ENCODE measurements at regions of chr12 and their contacts with region 1.

Region 1: GRCh38 chr12:60494244-60494643 is 898.4 kb downstream of the SLC16A7 start:
- DNase-seq: peak; percentile 63
- ATAC-seq: peak; percentile 81
- H3K4me3 ChIP-seq: no peak overlapping the region
- H3K27ac ChIP-seq: no peak overlapping the region
- H3K4me1 ChIP-seq: no peaks in the 10 kb centered on the region
- H3K27me3 ChIP-seq: no peaks in the 10 kb centered on the region
- CTCF ChIP-seq: peak; percentile 86
- POLR2A ChIP-seq: no peak
- RAD21 ChIP-seq: peak; percentile 86

Region 2: DNA sequence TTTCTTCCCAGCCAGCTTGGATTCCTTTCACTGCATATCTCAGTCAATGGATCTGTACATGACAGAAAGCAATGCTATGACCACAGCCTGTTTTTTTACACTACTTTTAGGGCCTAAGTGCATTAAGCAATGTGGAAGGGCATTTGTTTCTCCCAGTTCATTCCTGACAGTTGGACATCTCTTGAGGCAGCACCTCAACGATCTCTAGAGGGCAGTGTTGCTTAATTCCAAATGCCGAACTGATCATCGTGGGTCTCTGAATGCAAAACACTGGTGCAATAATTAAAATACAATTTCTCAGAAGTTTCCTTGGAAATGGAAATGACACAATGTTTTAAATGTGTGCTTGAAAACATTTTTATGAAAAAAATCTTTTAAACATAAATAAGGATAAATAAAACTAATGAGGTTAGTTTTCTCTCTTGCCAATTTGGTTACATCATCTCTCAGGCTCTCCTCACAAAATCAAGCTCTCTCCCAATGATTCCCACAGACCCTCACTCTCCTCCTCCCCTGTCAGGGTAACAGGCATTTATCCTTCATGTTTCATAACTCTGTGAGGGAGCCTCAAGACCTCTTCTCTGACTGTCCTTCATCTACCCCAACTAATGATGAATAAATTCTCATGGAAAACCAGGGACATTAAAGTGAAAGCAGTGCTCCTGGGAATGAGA is 1090.8 kb before region 1 on chr12:
- CTCF ChIA-PET with region 1: no interaction called
- POLR2A ChIA-PET with region 1: no interaction called
- dilution Hi-C with region 1: no loop called
- in situ Hi-C with region 1: loop called (anchors 25 kb)
- intact Hi-C with region 1: no loop called
- DNase-seq: peak; percentile 75
- ATAC-seq: peak; percentile 98
- H3K4me3 ChIP-seq: peak overlapping the region; percentile 19; the same call in 1 of the 2 replicates
- H3K27ac ChIP-seq: peak overlapping the region; percentile 35; the same call in 1 of the 2 replicates
- H3K4me1 ChIP-seq: no peaks in the 10 kb centered on the region
- H3K27me3 ChIP-seq: no peaks in the 10 kb centered on the region
- CTCF ChIP-seq: peak; percentile 82
- POLR2A ChIP-seq: no peak
- RAD21 ChIP-seq: peak; percentile 85

Region 3: GRCh38 chr12:59834659-59835474 is 659.4 kb before region 1 on chr12:
- CTCF ChIA-PET with region 1: interaction called, 5 read pairs
- POLR2A ChIA-PET with region 1: no interaction called
- dilution Hi-C with region 1: no loop called
- in situ Hi-C with region 1: no loop called
- intact Hi-C with region 1: loop called (anchors 1 kb)
- DNase-seq: peak; percentile 47
- ATAC-seq: no peak; the same call in 1 of the 2 replicates
- H3K4me3 ChIP-seq: no peak overlapping the region
- H3K27ac ChIP-seq: no peak overlapping the region
- H3K4me1 ChIP-seq: no peaks in the 10 kb centered on the region
- H3K27me3 ChIP-seq: no peaks in the 10 kb centered on the region
- CTCF ChIP-seq: peak; percentile 63
- POLR2A ChIP-seq: no peak
- RAD21 ChIP-seq: peak; percentile 59

Region 4: DNA sequence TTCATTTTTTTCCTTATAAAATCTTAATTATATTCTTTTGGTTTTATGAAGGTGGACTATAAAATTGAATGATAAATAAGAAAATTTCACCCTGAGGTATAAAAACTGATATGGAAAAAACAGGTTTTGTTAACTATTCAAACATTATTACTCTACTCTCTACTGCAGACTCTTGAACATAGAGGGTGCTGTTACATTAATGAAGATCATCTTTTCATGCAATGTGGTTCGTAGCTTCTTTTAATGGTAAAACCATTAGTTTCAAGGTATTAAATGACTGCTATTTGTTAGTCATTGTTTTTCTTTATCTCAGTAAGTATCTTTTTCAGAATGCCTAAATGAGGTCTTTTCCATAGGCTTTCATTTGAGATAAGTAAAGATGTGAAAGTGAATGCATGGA is 388.0 kb before region 1 on chr12:
- CTCF ChIA-PET with region 1: interaction called, 4 read pairs
- POLR2A ChIA-PET with region 1: no interaction called
- dilution Hi-C with region 1: no loop called
- in situ Hi-C with region 1: loop called (anchors 25 kb)
- intact Hi-C with region 1: loop called (anchors 2 kb)
- DNase-seq: peak; percentile 47
- ATAC-seq: peak; percentile 68
- H3K4me3 ChIP-seq: no peak overlapping the region
- H3K27ac ChIP-seq: no peak overlapping the region
- H3K4me1 ChIP-seq: no peaks in the 10 kb centered on the region; the same call in 1 of the 2 replicates
- H3K27me3 ChIP-seq: no peaks in the 10 kb centered on the region
- CTCF ChIP-seq: peak; percentile 48
- POLR2A ChIP-seq: no peak
- RAD21 ChIP-seq: peak; percentile 57

Region 5: GRCh38 chr12:60257063-60257462 is 237.2 kb before region 1 on chr12:
- CTCF ChIA-PET with region 1: interaction called, 6 read pairs
- POLR2A ChIA-PET with region 1: no interaction called
- dilution Hi-C with region 1: no loop called
- in situ Hi-C with region 1: loop called (anchors 10 kb)
- intact Hi-C with region 1: loop called (anchors 2 kb)
- DNase-seq: peak; percentile 86
- ATAC-seq: peak; percentile 93
- H3K4me3 ChIP-seq: no peak overlapping the region
- H3K27ac ChIP-seq: no peak overlapping the region
- H3K4me1 ChIP-seq: no peaks in the 10 kb centered on the region
- H3K27me3 ChIP-seq: no peaks in the 10 kb centered on the region
- CTCF ChIP-seq: peak; percentile 47
- POLR2A ChIP-seq: no peak
- RAD21 ChIP-seq: peak; percentile 65

Region 6: GRCh38 chr12:60888839-60889238 is 394.6 kb after region 1 on chr12:
- CTCF ChIA-PET with region 1: no interaction called
- POLR2A ChIA-PET with region 1: no interaction called
- dilution Hi-C with region 1: no loop called
- in situ Hi-C with region 1: no loop called
- intact Hi-C with region 1: no loop called
- DNase-seq: no peak
- ATAC-seq: no peak
- H3K4me3 ChIP-seq: no peak overlapping the region
- H3K27ac ChIP-seq: no peak overlapping the region
- H3K4me1 ChIP-seq: no peaks in the 10 kb centered on the region
- H3K27me3 ChIP-seq: no peaks in the 10 kb centered on the region
- CTCF ChIP-seq: no peak
- POLR2A ChIP-seq: no peak
- RAD21 ChIP-seq: no peak

Region 7: GRCh38 chr12:60977966-60978365 is 483.7 kb after region 1 on chr12:
- CTCF ChIA-PET with region 1: no interaction called
- POLR2A ChIA-PET with region 1: no interaction called
- dilution Hi-C with region 1: no loop called
- in situ Hi-C with region 1: no loop called
- intact Hi-C with region 1: no loop called
- DNase-seq: no peak
- ATAC-seq: no peak
- H3K4me3 ChIP-seq: no peak overlapping the region
- H3K27ac ChIP-seq: no peak overlapping the region
- H3K4me1 ChIP-seq: no peaks in the 10 kb centered on the region
- H3K27me3 ChIP-seq: no peaks in the 10 kb centered on the region
- CTCF ChIP-seq: no peak
- POLR2A ChIP-seq: no peak
- RAD21 ChIP-seq: no peak

Region 8: GRCh38 chr12:61993734-61994345 is 1499.6 kb after region 1 on chr12:
- CTCF ChIA-PET with region 1: no interaction called
- POLR2A ChIA-PET with region 1: no interaction called
- dilution Hi-C with region 1: no loop called
- in situ Hi-C with region 1: no loop called
- intact Hi-C with region 1: loop called (anchors 10 kb)
- DNase-seq: peak; percentile 6
- ATAC-seq: peak; percentile 71
- H3K4me3 ChIP-seq: no peak overlapping the region
- H3K27ac ChIP-seq: no peak overlapping the region
- H3K4me1 ChIP-seq: no peaks in the 10 kb centered on the region
- H3K27me3 ChIP-seq: no peaks in the 10 kb centered on the region
- CTCF ChIP-seq: peak; percentile 38
- POLR2A ChIP-seq: no peak
- RAD21 ChIP-seq: peak; percentile 50

Region 9: DNA sequence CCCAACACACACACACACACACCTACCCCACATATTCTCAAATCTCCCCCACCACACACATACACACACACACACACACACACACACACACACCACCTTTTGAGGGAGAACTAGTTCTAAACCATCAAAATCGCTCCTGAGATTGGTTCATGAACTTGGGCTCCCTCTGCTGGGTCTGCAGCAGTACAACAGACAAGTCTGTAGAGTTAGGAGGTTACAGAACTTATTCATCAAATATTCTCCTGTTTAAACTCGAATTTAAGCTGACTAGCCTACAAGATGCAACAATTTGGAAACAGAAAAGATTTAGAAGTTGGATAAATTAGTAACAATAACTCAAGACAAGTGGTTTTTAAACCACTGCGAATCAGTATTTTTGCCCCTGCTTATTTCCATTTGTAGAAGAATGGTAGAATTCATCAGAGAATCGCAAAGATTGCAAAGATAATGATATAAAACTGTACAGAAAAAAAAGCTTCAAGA is 1629.5 kb after region 1 on chr12:
- CTCF ChIA-PET with region 1: no interaction called
- POLR2A ChIA-PET with region 1: no interaction called
- dilution Hi-C with region 1: no loop called
- in situ Hi-C with region 1: no loop called
- intact Hi-C with region 1: loop called (anchors 10 kb)
- DNase-seq: peak; percentile 56
- ATAC-seq: peak; percentile 86
- H3K4me3 ChIP-seq: no peak overlapping the region
- H3K27ac ChIP-seq: no peak overlapping the region
- H3K4me1 ChIP-seq: no peaks in the 10 kb centered on the region
- H3K27me3 ChIP-seq: no peaks in the 10 kb centered on the region
- CTCF ChIP-seq: peak; percentile 63
- POLR2A ChIP-seq: no peak
- RAD21 ChIP-seq: peak; percentile 46

Measured in IMR-90 (cell line).